OCI-LY7 (cell line): ENCODE measurements at regions of chr16 and their contacts with region 1.

Region 1: DNA sequence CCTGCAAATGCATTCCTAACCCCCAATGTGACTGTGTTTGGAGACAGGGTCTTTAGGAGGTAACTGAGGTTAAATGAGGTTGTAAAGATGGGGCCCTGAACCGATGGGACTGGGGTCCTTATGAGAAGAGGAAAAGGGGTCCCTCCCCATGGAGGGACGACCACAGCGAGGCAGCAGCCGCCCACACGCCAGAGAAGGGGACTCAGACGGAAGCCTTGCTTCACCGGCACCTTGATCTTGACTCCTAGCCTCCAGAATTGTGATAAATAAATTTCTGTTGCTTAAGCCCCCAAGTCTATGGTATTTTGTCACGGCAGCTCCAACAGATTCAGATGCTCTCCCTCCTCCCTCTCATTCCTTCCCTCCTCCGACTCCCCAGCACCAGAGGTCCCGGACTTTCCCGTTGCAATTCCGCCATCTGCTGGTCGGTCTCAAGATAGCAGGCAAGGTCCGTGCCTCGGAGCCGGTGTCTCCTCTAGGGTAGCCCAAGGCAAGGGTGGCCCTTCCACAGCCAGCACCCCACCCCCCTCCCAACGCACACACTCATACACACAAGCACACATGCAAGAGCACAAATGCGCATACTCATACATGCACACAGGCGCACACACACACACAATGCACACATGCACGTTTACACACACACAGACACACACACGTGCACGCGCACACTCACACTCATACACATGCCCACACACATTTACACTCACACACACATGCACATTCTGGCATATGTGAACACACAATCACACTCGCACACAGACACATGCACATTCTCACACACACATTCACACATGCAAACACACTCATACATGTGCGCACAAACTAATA is 23.1 kb upstream of the C16orf78 start:
- DNase-seq: peak; percentile 63
- H3K4me3 ChIP-seq: no peak overlapping the region
- H3K27ac ChIP-seq: no peak overlapping the region
- H3K4me1 ChIP-seq: peaks cover 12% of the 10 kb centered on the region
- CTCF ChIP-seq: peak; percentile 93

Region 2: GRCh38 chr16:48687421-48688038 is 663.0 kb before region 1 on chr16:
- CTCF ChIA-PET with region 1: no interaction called
- POLR2A ChIA-PET with region 1: interaction called, 4 read pairs
- intact Hi-C with region 1: loop called (anchors 2 kb)
- DNase-seq: peak; percentile 68
- H3K4me3 ChIP-seq: no peak overlapping the region
- H3K27ac ChIP-seq: no peak overlapping the region
- H3K4me1 ChIP-seq: no peaks in the 10 kb centered on the region
- CTCF ChIP-seq: peak; percentile 86

Region 3: GRCh38 chr16:49000594-49000993 is 349.9 kb before region 1 on chr16:
- CTCF ChIA-PET with region 1: no interaction called
- POLR2A ChIA-PET with region 1: no interaction called
- intact Hi-C with region 1: loop called (anchors 1 kb)
- DNase-seq: peak; percentile 37
- H3K4me3 ChIP-seq: no peak overlapping the region
- H3K27ac ChIP-seq: no peak overlapping the region
- H3K4me1 ChIP-seq: no peaks in the 10 kb centered on the region
- CTCF ChIP-seq: peak; percentile 88

Region 4: DNA sequence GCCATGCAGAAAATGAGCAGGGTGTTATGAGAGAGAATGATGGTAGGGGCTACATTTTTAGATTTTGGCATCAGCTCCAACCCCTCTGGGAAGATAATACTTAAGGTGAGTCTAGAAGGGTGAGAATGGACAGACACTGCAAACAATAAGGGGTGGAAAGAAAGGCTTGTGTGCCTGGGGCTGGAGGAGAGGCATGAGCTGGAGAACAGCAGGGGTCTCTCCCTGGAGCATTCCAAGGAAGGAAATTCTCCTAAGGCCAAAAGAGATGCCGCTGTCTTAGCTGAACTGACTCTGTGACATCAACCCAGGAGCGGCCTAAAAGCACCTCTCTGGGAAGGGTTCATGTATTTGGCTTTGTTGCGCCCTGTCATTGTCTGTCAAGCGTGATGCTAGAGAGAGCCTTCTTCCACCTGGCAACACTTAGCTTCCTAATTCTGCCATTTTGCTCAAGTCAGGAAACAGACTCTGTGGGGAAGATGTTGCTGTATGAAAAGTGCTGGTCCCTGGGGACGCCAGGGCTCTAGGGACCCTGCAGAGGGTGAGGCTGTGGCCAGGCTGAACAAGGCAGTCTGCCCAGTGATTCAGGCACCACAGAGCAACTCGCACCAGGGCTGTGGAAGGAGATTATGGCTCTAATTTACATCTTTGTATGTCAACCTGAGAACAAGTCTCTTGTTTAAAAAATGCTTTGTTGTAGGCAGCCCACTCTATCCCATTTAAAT is 294.5 kb before region 1 on chr16:
- CTCF ChIA-PET with region 1: no interaction called
- POLR2A ChIA-PET with region 1: interaction called, 3 read pairs
- intact Hi-C with region 1: loop called (anchors 5 kb)
- DNase-seq: peak; percentile 81
- H3K4me3 ChIP-seq: peak overlapping the region; percentile 0
- H3K27ac ChIP-seq: peak overlapping the region; percentile 32
- H3K4me1 ChIP-seq: peaks cover 25% of the 10 kb centered on the region
- CTCF ChIP-seq: no peak

Region 5: DNA sequence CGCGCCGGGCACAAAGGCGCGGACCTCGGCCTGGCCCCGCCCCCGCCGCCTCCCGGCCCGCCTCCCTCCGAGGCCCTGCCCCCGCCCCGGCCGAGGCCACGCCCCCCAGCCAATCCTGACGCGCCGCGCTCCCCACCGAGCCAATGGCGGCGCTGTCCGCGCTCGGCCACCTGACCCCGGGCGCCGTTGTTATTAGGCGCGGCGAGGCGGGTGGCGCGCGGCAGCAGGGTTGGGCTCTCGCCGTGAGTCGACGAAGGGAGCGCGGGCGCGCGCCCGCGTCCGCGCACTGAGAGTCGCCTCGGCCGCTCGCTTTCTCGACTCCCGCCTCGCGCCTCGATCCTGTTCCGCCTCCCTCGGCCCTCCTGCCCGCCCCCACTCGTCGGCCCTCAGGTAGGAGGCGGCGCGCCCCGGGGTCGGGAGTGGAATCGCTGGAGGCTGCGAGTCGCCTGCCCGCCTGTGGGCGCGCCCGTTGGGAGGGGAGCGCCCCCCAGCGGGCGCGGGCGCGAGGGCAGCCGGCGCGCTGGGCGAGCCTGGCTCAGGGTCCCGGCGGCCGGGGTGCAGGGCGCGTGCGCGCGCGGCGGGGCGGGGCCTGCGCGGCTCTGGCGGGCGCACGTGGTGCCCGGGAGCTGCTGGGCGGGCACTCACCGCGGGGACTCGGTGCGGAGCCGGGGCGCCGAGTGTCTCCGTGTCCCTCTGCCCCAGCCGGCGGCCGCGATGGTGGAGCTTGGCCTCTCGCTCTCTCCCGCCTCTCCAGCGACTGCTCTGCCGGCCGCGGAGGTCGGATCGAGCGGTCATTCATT is 68.4 kb before region 1 on chr16:
- CTCF ChIA-PET with region 1: no interaction called
- POLR2A ChIA-PET with region 1: no interaction called
- intact Hi-C with region 1: loop called (anchors 2 kb)
- DNase-seq: peak; percentile 97
- H3K4me3 ChIP-seq: peak overlapping the region; percentile 72
- H3K27ac ChIP-seq: peak overlapping the region; percentile 66
- H3K4me1 ChIP-seq: peaks cover 8% of the 10 kb centered on the region
- CTCF ChIP-seq: peak; percentile 63